Psoas muscle (tissue), 8 donors: ENCODE measurements at regions of chr17 and their contacts with region 1.

Region 1: DNA sequence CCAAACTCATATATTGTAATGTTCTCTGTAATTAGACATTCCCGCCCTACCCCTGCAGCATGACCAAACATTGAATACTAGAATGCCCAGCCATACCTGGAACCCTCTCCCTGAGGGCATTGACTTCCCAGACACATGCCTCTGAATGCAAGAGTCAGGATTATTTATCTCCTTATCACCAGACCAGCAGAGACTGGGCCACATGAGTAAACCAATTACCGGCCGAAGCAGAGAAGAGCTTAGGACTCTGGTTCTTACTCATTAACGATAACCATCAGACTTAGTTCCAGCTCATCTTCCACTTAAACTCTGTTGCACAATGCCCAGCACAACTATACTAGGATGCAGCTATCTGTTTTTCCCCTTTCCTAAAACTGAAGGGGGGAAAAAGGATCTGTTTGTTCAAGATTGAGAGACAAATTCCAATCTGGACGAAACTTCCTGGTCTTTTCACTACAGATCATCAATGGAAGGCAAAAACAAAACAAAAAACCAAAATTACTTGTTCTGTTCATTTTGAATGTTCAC is 88.2 kb upstream of the CORO6 start:
- DNase-seq: no peak
- ATAC-seq: peak; percentile 30 to 70 (median 62)
- H3K4me3 ChIP-seq: peak overlapping the region; percentile 57
- H3K27ac ChIP-seq: peak overlapping the region; percentile 80
- H3K4me1 ChIP-seq: peaks cover 68% of the 10 kb centered on the region
- H3K27me3 ChIP-seq: no peaks in the 10 kb centered on the region
- CTCF ChIP-seq: no peak

Region 2: DNA sequence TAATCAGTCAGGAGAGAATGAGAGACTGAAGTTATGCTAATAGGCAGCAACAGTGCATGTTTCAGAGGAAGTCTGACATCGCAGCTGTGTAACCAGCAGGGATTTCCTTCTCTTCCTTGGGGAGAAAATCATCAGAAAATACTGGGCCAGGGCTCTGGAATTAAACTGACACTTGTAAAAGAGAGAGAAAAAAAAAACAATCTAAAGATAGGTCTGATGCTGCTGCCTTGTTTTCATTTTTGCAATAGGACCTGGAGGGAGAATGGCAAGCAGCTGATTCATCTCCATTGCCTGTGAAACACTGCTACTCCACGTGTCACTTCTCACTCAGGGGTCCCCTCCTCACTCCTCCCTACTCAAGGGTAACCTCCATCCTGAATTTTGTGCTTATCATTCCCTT is 70.5 kb before region 1 on chr17:
- intact Hi-C with region 1: loop called (anchors 1 to 10 kb)
- DNase-seq: no peak
- ATAC-seq: peak; percentile 51 to 64 (median 57)
- H3K4me3 ChIP-seq: peak overlapping the region; percentile 56
- H3K27ac ChIP-seq: peak overlapping the region; percentile 94
- H3K4me1 ChIP-seq: peaks cover 78% of the 10 kb centered on the region
- H3K27me3 ChIP-seq: no peaks in the 10 kb centered on the region
- CTCF ChIP-seq: no peak

Region 3: DNA sequence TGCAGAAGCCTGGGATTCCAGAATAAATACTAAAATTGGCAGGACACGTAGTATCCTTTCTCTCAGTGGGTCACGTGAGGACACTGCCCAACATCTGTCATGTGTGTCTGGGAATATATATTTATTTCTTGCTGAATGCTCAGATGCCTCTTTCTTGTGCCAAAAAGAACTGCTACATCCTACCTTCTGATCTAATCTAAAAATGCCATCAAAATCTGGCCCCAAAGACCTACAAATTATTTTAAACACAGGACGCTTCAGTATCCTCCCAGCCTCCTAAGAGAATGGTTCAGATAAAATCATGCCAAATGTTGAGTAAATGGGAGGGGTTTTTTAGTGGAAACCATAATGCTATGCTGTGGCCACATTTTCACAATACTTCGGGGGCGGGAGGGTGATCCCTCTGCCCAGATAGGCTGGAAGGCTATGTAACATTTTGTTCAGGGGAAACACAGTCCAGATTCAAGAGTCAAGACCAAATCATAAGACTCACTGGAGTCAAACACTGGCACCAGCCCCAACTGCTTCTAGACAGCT is 65.4 kb before region 1 on chr17:
- intact Hi-C with region 1: loop called in 1 of 2 experiments (anchors 10 kb)
- DNase-seq: peak; percentile 83 to 90
- ATAC-seq: peak in 3 of 4 donors; percentile 61 to 71 (median 63)
- H3K4me3 ChIP-seq: no peak overlapping the region
- H3K27ac ChIP-seq: peak overlapping the region; percentile 94
- H3K4me1 ChIP-seq: peaks cover 59% of the 10 kb centered on the region
- H3K27me3 ChIP-seq: no peaks in the 10 kb centered on the region
- CTCF ChIP-seq: no peak

Region 4: DNA sequence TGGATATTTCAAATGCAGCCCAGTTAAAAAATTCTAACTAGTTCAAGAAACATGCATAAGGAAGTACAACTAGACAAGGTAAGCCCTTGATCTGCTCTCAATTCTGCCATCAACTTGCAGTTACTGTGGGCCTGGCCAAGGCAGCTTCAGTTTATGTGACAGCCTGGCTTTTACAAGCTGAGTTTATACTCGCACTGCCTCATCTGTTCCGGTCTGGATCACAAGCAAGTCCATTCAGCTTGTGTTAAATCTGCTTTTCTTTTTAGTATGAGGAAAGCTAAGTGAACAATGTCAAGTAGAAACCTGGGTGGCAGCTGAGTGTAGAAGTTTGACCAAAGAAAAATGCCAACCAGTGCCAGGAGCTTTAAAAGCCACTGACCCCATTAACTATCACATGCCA is 11.7 kb before region 1 on chr17:
- intact Hi-C with region 1: no loop called
- DNase-seq: no peak
- ATAC-seq: peak; percentile 34 to 54 (median 46)
- H3K4me3 ChIP-seq: peak overlapping the region; percentile 43
- H3K27ac ChIP-seq: peak overlapping the region; percentile 80
- H3K4me1 ChIP-seq: peaks cover 38% of the 10 kb centered on the region
- H3K27me3 ChIP-seq: no peaks in the 10 kb centered on the region
- CTCF ChIP-seq: no peak

Region 5: GRCh38 chr17:29740017-29740416 is 29.1 kb after region 1 on chr17:
- intact Hi-C with region 1: loop called in 1 of 2 experiments (anchors 5 kb)
- DNase-seq: no peak
- ATAC-seq: no peak
- H3K4me3 ChIP-seq: peak overlapping the region; percentile 2
- H3K27ac ChIP-seq: peak overlapping the region; percentile 90
- H3K4me1 ChIP-seq: peaks cover 54% of the 10 kb centered on the region
- H3K27me3 ChIP-seq: no peaks in the 10 kb centered on the region
- CTCF ChIP-seq: no peak